ENCODE measurements at regions of chr17 and their contacts with region 1.

Region 1: DNA sequence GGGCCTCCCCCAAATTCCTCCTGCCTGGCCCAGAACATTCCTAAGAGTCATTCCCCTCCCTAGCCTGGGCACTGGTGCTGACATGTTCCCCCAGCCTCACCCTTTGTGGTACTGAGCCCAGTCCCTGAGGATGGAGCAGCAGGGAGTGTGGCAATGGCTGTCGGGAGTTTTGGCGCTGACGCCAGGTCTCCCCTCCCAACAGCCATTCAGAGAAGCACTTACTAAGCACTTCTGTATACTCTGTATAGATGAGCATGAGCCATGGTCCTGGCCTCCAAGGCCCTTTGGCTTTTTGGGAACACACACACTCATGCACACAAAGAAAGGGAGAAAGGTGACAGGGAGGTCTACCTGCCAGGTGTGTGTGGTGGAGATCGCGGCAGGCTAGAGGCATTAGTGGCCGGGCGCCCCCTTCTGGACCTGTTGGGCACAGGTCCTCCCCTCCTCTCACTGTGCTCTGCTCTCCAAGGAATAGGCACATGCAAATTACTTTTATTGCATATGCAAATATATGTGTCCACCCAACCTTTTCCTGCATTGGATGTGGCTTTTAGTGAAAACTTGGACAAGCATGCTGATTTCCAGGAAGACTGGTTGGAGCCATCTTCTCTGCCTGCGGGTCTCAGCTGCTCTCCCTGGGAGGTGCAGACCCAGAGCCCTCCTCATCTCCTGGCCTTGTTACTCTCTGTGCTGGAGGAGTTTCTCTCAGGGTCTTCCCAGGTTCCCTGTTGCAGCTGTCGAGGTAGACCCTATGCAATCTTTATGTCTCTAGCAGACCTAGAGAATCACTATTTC is 17.4 kb upstream of the C17orf107 start:
- DNase-seq: peak; percentile 59 to 83 (median 69)
- ATAC-seq: peak; percentile 97
- H3K4me3 ChIP-seq: no peak overlapping the region
- H3K4me3 Mint-ChIP-seq: no peak overlapping the region
- H3K27ac ChIP-seq: no peak overlapping the region
- H3K27ac Mint-ChIP-seq: no peak overlapping the region
- H3K4me1 ChIP-seq: peaks cover 2% of the 10 kb centered on the region
- H3K4me1 Mint-ChIP-seq: no peaks in the 10 kb centered on the region
- H3K27me3 ChIP-seq: no peaks in the 10 kb centered on the region
- H3K27me3 Mint-ChIP-seq: no peaks in the 10 kb centered on the region
- CTCF ChIP-seq: peak; percentile 90

Region 2: DNA sequence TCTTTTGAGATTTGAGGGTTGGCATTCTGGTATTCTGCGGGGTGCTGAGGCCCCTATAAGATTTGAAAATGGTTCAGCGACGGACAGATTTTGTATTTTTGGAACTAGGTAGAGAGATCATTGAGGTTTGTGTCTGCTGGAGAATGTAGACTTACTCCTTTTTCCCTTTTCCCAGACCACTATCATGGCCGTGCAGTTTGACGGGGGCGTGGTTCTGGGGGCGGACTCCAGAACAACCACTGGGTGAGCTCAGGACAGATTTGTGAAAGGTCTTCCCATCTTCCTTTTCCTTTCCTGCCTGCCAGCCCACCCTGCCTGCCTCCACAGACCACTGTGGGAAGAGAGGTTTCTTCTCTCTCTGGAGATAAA is 85.4 kb before region 1 on chr17:
- CTCF ChIA-PET with region 1: no interaction called
- POLR2A ChIA-PET with region 1: no interaction called
- intact Hi-C with region 1: no loop called
- DNase-seq: peak in 2 of 14 experiments; percentile 19 to 33
- ATAC-seq: no peak
- H3K4me3 ChIP-seq: peak overlapping the region; percentile 69
- H3K4me3 Mint-ChIP-seq: peak overlapping the region; percentile 99
- H3K27ac ChIP-seq: peak overlapping the region; percentile 50 to 56
- H3K27ac Mint-ChIP-seq: peak overlapping the region; percentile 84
- H3K4me1 ChIP-seq: peaks cover 20% of the 10 kb centered on the region
- H3K4me1 Mint-ChIP-seq: peaks cover 15% of the 10 kb centered on the region
- H3K27me3 ChIP-seq: no peaks in the 10 kb centered on the region
- H3K27me3 Mint-ChIP-seq: peaks cover 4% of the 10 kb centered on the region
- CTCF ChIP-seq: no peak

Region 3: DNA sequence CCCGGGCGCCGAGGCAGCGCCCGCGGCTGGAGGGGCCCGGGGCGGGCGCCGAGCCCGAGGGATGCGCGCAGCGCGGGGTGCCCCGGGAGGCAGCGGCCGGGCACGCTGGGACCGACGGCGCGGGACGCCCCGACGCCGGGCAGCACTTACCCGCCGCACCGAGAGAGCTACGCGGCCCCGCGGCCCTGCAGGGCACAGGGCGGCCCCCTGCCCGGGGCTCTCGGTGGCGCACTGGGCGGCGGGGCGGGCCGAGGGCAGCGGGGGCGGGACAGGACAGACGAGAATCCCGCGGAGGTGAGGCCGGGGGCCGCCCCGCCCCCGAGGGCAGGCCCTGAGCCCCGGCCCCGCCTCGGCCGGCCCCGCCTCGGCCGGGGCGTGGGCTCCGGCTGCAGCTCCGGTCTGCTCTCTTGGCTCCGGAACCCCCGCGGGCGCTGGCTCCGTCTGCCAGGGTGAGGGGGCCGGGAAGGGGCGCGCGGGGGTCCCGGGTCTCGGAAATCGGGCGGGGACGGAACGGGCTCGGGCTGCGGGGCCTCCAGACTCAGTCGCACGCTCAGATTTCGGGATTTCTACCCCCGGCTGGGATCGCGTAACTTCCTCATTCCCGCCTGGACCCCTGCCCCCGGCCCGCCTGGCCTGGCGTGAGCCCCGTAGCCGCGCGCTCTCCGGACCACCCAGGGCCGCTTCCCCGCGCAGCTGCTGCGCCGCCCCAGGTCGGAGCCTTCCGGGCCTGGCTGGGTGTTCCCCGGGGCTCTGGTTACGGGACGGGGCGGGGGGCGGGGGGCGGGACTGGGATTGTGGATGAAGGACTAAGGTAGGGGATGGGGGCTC is 75.0 kb before region 1 on chr17 and contains the start of gene PLD2:
- CTCF ChIA-PET with region 1: no interaction called
- POLR2A ChIA-PET with region 1: no interaction called
- intact Hi-C with region 1: loop called in 1 of 2 experiments (anchors 5 kb)
- DNase-seq: peak; percentile 68 to 94 (median 84)
- ATAC-seq: peak; percentile 98
- H3K4me3 ChIP-seq: peak within 1 kb of the TSS; percentile 57
- H3K4me3 Mint-ChIP-seq: peak within 1 kb of the TSS; percentile 87
- H3K27ac ChIP-seq: no peak within 1 kb of the TSS
- H3K27ac Mint-ChIP-seq: no peak within 1 kb of the TSS
- H3K4me1 ChIP-seq: peaks cover 12% of the 10 kb centered on the region
- H3K4me1 Mint-ChIP-seq: peaks cover 21% of the 10 kb centered on the region
- H3K27me3 ChIP-seq: no peaks in the 10 kb centered on the region
- H3K27me3 Mint-ChIP-seq: no peaks in the 10 kb centered on the region
- CTCF ChIP-seq: no peak
- total RNA-seq, gene PLD2: 10.2 to 10.7 TPM

Region 4: DNA sequence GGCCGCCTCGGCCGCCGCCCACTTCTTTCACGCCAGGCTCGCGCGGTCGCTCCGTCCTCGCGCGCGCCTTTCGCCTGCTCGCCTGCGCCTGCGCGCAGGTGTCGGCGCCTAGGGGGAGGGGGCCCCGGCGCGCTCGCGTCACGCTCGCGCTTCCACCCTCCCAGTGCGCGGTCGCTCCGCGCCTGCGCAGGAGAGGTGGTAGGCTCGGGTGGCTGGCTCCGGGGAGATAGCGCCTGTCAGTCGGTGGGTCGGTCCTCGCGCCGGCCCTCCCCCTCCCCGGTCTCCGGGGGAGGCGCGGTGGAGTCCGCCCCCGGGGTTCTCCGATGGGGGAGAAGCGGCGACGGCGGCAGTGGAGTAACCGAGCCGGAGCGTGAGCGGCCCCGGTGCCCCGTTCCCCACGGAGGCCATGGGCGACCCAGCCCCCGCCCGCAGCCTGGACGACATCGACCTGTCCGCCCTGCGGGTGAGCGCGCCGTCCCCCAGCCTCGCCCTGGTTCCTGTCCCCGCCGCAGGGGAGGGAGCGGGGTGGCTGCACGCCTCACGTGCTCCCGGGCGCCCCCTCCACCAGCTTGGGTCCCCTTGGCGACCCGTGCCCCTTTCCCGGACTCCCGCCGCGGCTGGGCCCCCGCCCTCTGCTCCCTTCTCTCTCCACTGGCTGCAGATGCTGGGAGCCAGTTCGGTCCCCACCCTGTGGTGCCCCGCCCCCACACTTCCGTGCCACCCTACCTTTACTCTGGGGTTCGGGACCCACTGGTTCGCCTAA is 48.6 kb before region 1 on chr17 and contains the start of gene MINK1:
- CTCF ChIA-PET with region 1: no interaction called
- POLR2A ChIA-PET with region 1: no interaction called
- intact Hi-C with region 1: loop called in 1 of 2 experiments (anchors 5 kb)
- DNase-seq: peak; percentile 76 to 98 (median 88)
- ATAC-seq: peak; percentile 87
- H3K4me3 ChIP-seq: peak within 1 kb of the TSS; percentile 85
- H3K4me3 Mint-ChIP-seq: peak within 1 kb of the TSS; percentile 94
- H3K27ac ChIP-seq: peak within 1 kb of the TSS; percentile 63 to 74
- H3K27ac Mint-ChIP-seq: peak within 1 kb of the TSS; percentile 80
- H3K4me1 ChIP-seq: peaks cover 32% of the 10 kb centered on the region
- H3K4me1 Mint-ChIP-seq: peaks cover 48% of the 10 kb centered on the region
- H3K27me3 ChIP-seq: no peaks in the 10 kb centered on the region
- H3K27me3 Mint-ChIP-seq: no peaks in the 10 kb centered on the region
- CTCF ChIP-seq: no peak
- total RNA-seq, gene MINK1: 163 to 171 TPM